Gastrocnemius medialis (tissue), 4 donors: ENCODE measurements at regions of chr10 and their contacts with region 1.

Region 1: DNA sequence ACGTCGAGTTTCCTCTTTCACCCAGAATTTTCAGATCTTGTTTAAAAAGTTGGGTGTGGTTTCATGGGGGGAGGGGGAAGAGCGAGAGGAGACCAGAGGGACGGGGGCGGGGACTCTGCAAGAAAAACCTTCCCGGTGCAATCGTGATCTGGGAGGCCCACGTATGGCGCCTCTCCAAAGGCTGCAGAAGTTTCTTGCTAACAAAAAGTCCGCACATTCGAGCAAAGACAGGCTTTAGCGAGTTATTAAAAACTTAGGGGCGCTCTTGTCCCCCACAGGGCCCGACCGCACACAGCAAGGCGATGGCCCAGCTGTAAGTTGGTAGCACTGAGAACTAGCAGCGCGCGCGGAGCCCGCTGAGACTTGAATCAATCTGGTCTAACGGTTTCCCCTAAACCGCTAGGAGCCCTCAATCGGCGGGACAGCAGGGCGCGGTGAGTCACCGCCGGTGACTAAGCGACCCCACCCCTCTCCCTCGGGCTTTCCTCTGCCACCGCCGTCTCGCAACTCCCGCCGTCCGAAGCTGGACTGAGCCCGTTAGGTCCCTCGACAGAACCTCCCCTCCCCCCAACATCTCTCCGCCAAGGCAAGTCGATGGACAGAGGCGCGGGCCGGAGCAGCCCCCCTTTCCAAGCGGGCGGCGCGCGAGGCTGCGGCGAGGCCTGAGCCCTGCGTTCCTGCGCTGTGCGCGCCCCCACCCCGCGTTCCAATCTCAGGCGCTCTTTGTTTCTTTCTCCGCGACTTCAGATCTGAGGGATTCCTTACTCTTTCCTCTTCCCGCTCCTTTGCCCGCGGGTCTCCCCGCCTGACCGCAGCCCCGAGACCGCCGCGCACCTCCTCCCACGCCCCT is at the start of gene VIM:
- DNase-seq: peak; percentile 77 to 84
- ATAC-seq: peak; percentile 66 to 70
- H3K4me3 ChIP-seq: peak within 1 kb of the TSS; percentile 56 to 83 (median 72)
- H3K27ac ChIP-seq: peak within 1 kb of the TSS; percentile 91 to 94 (median 92)
- H3K4me1 ChIP-seq: peaks cover 13 to 22% of the 10 kb centered on the region in 2 donors
- H3K27me3 ChIP-seq: peaks cover 24 to 59% (median 48%) of the 10 kb centered on the region in 3 donors
- CTCF ChIP-seq: peak in 1 of 5 experiments; percentile 10
- POLR2A ChIP-seq: peak; percentile 23 to 41
- total RNA-seq, gene VIM: 355 to 835 (median 589) TPM

Region 2: DNA sequence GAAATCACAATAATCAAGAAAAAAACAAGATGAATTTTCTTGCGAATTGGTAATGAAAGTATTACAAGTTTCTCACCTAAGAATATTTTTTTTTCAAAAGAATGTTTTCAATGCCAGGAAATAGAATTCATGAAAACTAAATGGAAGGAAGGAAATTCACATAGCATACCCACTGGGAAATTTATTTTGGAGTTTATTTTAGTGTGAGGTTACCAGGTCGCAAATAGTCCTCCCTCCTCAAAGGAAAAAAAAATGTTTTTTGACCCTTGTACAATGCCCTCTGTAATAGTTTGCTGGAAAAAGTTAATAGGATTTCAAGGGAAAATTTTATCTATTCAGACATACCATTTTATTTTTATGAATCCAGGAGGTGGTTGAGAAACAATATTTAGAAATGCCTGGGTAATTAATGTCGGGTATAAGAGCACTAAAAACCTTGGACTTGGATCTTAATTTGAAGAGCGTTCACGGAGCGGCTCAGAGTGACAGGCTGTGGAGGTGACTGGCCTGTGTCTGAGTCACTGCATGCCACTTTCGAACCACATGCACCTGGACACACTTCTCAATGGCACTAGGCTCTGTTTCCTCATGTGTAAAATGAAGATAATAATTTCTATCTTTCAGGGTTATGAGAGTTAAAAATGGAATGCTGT is 126.9 kb before region 1 on chr10:
- in situ Hi-C with region 1: no loop called
- intact Hi-C with region 1: no loop called
- DNase-seq: no peak
- ATAC-seq: no peak
- H3K4me3 ChIP-seq: no peak overlapping the region
- H3K27ac ChIP-seq: peak overlapping the region in 3 of 4 donors; percentile 3 to 7 (median 6)
- H3K4me1 ChIP-seq: no peaks in the 10 kb centered on the region
- H3K27me3 ChIP-seq: no peaks in the 10 kb centered on the region
- CTCF ChIP-seq: no peak
- POLR2A ChIP-seq: no peak

Region 3: DNA sequence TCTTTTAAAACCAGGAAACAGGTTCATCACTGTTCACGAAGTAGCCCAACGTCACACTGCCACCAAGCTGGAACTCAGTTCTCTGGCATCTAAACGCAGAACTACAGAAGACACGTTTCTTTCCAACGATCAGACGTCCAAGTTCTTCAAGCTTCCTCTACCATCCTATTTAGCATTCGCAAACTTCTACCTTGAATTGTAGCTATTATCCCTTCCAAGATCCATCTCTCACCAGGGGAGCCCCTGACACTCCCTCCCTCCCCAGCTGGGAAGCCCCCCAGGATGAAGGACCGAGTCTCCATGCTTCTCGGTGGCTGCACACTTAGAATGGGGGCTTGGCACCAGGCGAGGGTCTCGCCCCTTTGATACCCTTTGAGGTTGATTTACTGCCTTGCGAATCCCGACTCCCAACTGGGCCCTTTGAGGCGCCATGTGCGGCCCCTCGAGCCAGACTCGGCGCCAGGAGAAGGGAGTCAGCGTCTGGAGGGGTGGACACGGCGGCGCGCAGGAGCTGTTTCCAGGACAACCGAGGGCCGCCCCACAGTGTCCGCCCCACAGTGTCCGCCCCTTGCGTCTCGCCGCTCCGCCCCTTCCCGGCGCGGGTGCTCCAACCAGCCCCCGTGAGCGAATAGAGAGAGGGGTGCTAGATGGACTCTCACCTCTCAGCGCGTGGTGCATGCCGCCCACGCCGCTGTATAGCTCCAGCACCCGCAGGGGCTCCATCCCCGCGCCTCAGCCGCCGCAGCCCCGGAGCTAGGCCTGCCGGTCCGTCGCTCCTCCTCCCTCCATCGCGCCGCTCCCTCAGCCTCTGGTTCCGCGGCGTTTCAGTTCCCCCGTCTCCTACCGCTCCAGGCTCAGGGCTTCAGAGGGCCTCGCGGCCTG is 27.2 kb before region 1 on chr10 and contains the start of gene TRDMT1:
- in situ Hi-C with region 1: no loop called
- intact Hi-C with region 1: loop called (anchors 1 kb)
- DNase-seq: peak; percentile 66 to 73
- ATAC-seq: peak; percentile 94 to 96
- H3K4me3 ChIP-seq: peak within 1 kb of the TSS; percentile 83 to 93 (median 90)
- H3K27ac ChIP-seq: peak within 1 kb of the TSS; percentile 78 to 88 (median 86)
- H3K4me1 ChIP-seq: peaks cover 9 to 18% of the 10 kb centered on the region in 2 donors
- H3K27me3 ChIP-seq: no peaks in the 10 kb centered on the region
- CTCF ChIP-seq: peak in 1 of 5 experiments; percentile 29
- POLR2A ChIP-seq: peak; percentile 38 to 40
- total RNA-seq, gene TRDMT1: 0.85 to 4.7 (median 2.1) TPM